Ascending aorta (tissue), 2 donors: ENCODE measurements at regions of chr13 and their contacts with region 1.

Region 1: DNA sequence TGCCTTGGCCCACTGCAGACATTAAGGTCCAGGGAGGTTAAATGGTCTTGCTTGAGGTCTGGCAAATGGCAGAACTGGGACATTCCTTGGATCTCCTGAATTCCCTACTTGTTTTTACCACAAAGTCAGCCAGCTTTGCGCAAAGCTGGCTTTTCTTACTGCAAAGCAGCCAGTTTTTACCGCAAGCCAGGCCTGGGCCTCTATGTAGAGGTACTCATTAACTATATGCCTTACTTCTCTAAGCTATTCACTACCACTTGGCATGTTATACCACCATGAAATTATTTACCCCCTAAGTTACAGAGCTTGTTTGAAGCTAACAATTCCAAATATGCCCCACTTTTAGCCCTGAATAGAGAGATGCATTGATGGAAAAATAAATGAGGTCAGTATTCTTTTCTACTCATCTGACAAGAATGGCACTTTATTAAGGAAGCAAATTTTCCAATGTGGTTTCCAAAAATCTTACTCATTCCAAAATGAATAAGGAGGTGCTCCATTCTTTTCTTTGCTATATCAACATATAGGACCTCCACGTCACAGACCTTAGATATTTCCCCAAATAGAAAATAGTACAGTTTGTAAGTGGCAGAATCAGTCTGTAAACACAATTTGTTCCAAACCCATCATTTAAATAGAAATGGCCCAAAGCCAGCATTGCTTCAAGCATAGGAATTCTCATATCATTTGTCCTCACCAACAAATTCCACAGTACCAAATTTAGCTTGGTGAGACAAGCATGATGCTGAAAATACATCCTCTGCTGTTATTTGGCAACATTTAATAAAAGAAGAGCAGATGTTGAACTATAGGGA is 143.9 kb upstream of the TSC22D1 start:
- DNase-seq: peak in 1 of 2 donors; percentile 71
- H3K4me3 ChIP-seq: no peak overlapping the region
- H3K27ac ChIP-seq: peak overlapping the region; percentile 78 to 82
- H3K4me1 ChIP-seq: peaks cover 0 to 28% of the 10 kb centered on the region in 2 donors
- H3K27me3 ChIP-seq: no peaks in the 10 kb centered on the region
- CTCF ChIP-seq: no peak

Region 2: DNA sequence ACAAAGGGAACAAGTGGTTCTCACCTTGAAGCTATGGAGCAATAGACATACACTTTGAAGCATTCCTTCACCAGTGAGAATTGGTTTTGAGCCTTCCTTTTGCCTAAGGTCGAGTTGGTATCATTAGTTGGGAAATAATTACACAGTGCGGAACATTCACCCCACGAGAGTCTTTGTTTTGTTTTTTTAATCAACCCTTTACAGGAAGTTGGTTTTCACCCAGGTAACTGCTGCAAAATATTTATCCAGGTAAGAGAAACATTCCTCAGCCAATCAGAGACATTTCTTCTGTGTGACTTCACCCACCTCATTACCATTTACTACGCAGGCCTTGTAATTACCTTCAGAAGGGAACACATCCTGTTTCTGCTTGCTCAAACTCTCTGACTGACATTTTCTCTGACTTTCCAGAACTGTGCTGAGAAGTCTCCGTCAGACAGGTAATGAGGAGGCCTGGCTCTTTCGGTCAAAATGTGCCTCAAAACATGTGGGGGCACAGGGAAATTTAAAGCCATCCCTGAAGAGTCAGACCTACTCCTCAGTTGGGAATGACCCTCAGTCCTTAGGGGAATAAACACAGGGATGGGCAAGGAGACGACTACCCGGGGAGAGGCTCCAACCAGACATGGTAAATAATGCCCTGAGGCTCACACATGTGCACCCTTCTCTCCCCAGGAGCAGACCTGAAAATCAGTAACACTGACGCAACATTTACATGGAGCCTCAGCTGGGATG is 369.1 kb before region 1 on chr13:
- intact Hi-C with region 1: no loop called
- DNase-seq: no peak
- H3K4me3 ChIP-seq: no peak overlapping the region
- H3K27ac ChIP-seq: no peak overlapping the region
- H3K4me1 ChIP-seq: no peaks in the 10 kb centered on the region
- H3K27me3 ChIP-seq: no peaks in the 10 kb centered on the region
- CTCF ChIP-seq: no peak

Region 3: GRCh38 chr13:44796597-44797490 is 76.8 kb after region 1 on chr13:
- intact Hi-C with region 1: no loop called
- DNase-seq: no peak
- H3K4me3 ChIP-seq: no peak overlapping the region
- H3K27ac ChIP-seq: peak overlapping the region; percentile 24 to 26
- H3K4me1 ChIP-seq: no peaks in the 10 kb centered on the region
- H3K27me3 ChIP-seq: no peaks in the 10 kb centered on the region
- CTCF ChIP-seq: no peak

Region 4: DNA sequence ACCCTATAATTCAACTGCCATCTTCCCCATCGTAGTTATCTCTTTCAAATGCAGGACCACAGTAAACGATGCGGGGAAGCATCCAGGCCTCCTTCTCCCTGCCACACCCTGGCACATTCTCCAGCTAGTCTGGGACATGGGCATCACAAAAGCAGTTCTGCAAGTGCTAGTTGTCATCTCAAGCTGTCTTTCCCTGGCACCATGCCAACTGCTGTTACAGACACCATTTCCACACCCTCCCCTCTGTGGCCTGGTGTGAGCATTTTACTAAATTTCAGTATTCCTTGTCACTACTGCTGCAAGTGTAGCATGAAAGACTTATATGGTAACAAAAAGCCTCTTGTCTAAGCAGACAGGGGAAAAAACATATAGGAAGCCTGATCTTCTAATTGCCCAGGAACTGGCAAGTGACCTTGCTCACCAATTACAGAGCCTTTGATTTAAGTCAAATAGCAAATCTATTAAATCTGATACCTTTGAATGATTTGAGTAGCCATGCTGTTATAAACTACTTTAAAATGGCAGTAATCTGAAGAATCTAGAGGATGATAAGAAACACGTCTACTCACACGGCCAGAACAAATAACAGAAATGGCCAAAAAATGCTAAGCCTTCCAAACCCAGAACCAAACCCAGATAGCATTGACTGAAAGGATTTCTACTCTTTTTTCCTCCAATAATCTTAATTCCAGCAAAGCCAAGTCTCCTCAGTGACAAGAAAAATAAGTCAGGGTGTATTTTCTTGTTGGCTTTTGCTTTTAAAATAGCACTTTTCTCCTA is 90.2 kb after region 1 on chr13:
- intact Hi-C with region 1: loop called (anchors 5 kb)
- DNase-seq: peak in 1 of 2 donors; percentile 73
- H3K4me3 ChIP-seq: no peak overlapping the region
- H3K27ac ChIP-seq: peak overlapping the region; percentile 4 to 57
- H3K4me1 ChIP-seq: peaks cover 3 to 28% of the 10 kb centered on the region in 2 donors
- H3K27me3 ChIP-seq: no peaks in the 10 kb centered on the region
- CTCF ChIP-seq: no peak